Naive thymus-derived CD4-positive, alpha-beta T cell (primary cell): ENCODE measurements at regions of chr1 and their contacts with region 1.

Region 1: GRCh38 chr1:109263597-109264398 is 14.5 kb downstream of the CELSR2 start:
- DNase-seq: peak; percentile 57 to 86 (median 68)
- ATAC-seq: peak; percentile 92
- H3K4me3 ChIP-seq: no peak overlapping the region
- H3K4me3 Mint-ChIP-seq: peak overlapping the region in 1 of 10 donors; percentile 60
- H3K27ac ChIP-seq: no peak overlapping the region
- H3K27ac Mint-ChIP-seq: peak overlapping the region in 1 of 9 donors; percentile 36
- H3K4me1 ChIP-seq: no peaks in the 10 kb centered on the region
- H3K4me1 Mint-ChIP-seq: peaks cover 0 to 9% (median 0%) of the 10 kb centered on the region in 7 donors
- H3K27me3 ChIP-seq: no peaks in the 10 kb centered on the region
- H3K27me3 Mint-ChIP-seq: no peaks in the 10 kb centered on the region

Region 2: GRCh38 chr1:108828022-108828961 is 435.5 kb before region 1 on chr1:
- CTCF ChIA-PET with region 1: no interaction called
- POLR2A ChIA-PET with region 1: no interaction called
- intact Hi-C with region 1: loop called in 1 of 2 experiments (anchors 2 kb)
- DNase-seq: peak; percentile 37 to 62 (median 46)
- ATAC-seq: peak; percentile 61
- H3K4me3 ChIP-seq: no peak overlapping the region
- H3K4me3 Mint-ChIP-seq: no peak overlapping the region
- H3K27ac ChIP-seq: no peak overlapping the region
- H3K27ac Mint-ChIP-seq: no peak overlapping the region
- H3K4me1 ChIP-seq: no peaks in the 10 kb centered on the region
- H3K4me1 Mint-ChIP-seq: peaks cover 0 to 9% (median 0%) of the 10 kb centered on the region in 7 donors
- H3K27me3 ChIP-seq: peaks cover 0 to 3% of the 10 kb centered on the region in 2 donors
- H3K27me3 Mint-ChIP-seq: peaks cover 0 to 12% (median 0%) of the 10 kb centered on the region in 5 donors

Region 3: GRCh38 chr1:109201123-109201703 is 62.6 kb before region 1 on chr1:
- CTCF ChIA-PET with region 1: interaction called, 3 read pairs
- POLR2A ChIA-PET with region 1: no interaction called
- intact Hi-C with region 1: loop called in 1 of 2 experiments (anchors 1 kb)
- DNase-seq: peak in 3 of 9 donors; percentile 11 to 60 (median 17)
- ATAC-seq: no peak
- H3K4me3 ChIP-seq: no peak overlapping the region
- H3K4me3 Mint-ChIP-seq: no peak overlapping the region
- H3K27ac ChIP-seq: no peak overlapping the region
- H3K27ac Mint-ChIP-seq: peak overlapping the region in 2 of 9 donors; percentile 26 to 35
- H3K4me1 ChIP-seq: peaks cover 0 to 12% of the 10 kb centered on the region in 2 donors
- H3K4me1 Mint-ChIP-seq: peaks cover 5 to 28% (median 19%) of the 10 kb centered on the region in 7 donors
- H3K27me3 ChIP-seq: no peaks in the 10 kb centered on the region
- H3K27me3 Mint-ChIP-seq: no peaks in the 10 kb centered on the region

Region 4: DNA sequence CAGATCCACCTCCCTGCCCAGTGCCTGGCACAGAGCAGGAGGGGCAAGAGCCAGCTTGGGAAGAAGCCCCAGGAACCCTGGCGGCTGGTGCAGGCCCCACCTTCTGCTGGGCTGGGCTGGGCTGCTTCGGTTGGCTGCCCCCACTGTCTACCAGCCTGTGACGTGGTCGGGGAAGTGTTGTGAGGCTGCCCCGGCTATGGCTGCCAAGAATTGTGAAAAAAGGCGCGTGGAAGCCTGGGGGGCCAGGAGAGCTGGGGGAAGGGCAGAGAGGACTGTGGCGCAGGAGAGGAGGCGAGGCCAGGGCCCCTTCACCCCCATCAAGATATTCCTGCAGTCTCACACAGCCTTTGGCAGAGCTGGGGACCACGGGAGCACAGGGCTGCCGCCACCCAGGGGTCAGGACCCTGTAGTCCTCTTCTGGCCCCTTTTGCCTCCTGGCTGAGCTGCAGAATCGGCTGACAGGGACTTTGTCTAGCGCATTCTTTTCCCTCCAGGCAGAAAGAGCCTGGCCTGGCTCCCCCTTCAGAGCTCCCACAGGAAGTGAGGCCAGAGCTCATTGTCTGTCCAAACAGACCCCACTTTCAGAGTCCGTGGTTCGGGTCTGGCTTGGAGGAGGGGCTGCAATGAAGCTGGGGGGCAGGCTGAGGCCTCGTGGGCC is 10.2 kb before region 1 on chr1:
- CTCF ChIA-PET with region 1: no interaction called
- POLR2A ChIA-PET with region 1: no interaction called
- intact Hi-C with region 1: no loop called
- DNase-seq: no peak
- ATAC-seq: no peak
- H3K4me3 ChIP-seq: no peak overlapping the region
- H3K4me3 Mint-ChIP-seq: no peak overlapping the region
- H3K27ac ChIP-seq: no peak overlapping the region
- H3K27ac Mint-ChIP-seq: no peak overlapping the region
- H3K4me1 ChIP-seq: peaks cover 11 to 14% of the 10 kb centered on the region in 2 donors
- H3K4me1 Mint-ChIP-seq: peaks cover 3 to 27% (median 20%) of the 10 kb centered on the region in 7 donors
- H3K27me3 ChIP-seq: no peaks in the 10 kb centered on the region
- H3K27me3 Mint-ChIP-seq: peaks cover 0 to 15% (median 0%) of the 10 kb centered on the region in 5 donors

Region 5: DNA sequence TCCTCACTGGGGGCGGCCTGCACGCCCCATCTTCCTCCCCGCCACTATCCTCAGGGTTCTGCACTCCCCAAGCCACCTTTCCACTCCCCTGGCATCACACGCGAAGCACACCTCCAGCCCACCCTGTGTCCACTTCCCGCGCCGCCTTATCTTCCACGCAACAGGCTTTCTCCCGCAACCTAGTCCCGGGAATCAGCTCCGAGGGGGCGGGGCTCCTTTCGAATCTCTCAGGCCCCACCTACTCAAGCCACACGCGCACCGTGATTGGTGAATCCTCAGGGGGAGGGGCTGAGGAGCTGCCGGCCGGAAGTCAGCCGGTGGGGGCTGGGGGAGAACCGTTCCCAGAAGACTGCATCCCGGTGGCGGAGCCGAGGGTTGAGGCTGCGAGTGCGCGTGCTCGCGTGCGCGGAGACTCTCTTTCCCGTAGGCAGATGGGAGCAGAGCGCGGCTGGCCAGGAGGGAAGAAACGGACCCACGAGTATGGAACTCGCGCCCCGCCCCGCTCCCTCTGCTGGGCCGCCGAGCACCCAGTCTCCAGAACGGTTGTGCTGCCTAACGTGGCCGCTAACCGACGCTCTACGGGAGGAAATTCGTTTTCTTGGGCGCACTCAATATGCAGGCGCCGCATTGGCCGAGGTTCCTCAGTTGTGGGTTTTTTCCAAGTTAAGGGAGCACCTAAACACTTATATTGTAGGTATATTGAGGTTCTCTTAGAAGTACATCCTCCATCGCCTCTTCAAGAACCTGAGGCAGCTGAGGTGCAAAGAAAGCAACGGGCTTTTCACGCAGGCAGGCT is 19.4 kb after region 1 on chr1 and contains the start of gene PSRC1:
- CTCF ChIA-PET with region 1: interaction called, 3 read pairs
- POLR2A ChIA-PET with region 1: no interaction called
- intact Hi-C with region 1: loop called in 1 of 2 experiments (anchors 1 kb)
- DNase-seq: peak; percentile 78 to 94 (median 88)
- ATAC-seq: peak; percentile 98
- H3K4me3 ChIP-seq: peak within 1 kb of the TSS; percentile 92
- H3K4me3 Mint-ChIP-seq: peak within 1 kb of the TSS; percentile 89 to 99 (median 96)
- H3K27ac ChIP-seq: peak within 1 kb of the TSS; percentile 65
- H3K27ac Mint-ChIP-seq: peak within 1 kb of the TSS; percentile 55 to 94 (median 88)
- H3K4me1 ChIP-seq: peaks cover 8 to 11% of the 10 kb centered on the region in 2 donors
- H3K4me1 Mint-ChIP-seq: peaks cover 6 to 29% (median 14%) of the 10 kb centered on the region in 7 donors
- H3K27me3 ChIP-seq: no peaks in the 10 kb centered on the region
- H3K27me3 Mint-ChIP-seq: peaks cover 0 to 8% (median 0%) of the 10 kb centered on the region in 5 donors
- total RNA-seq, gene PSRC1: 0.38 to 16.1 (median 1.3) TPM in 4 of 5 experiments, not detected in the other

Region 6: GRCh38 chr1:109298666-109299557 is 35.1 kb after region 1 on chr1:
- CTCF ChIA-PET with region 1: no interaction called
- POLR2A ChIA-PET with region 1: no interaction called
- intact Hi-C with region 1: no loop called
- DNase-seq: peak in 1 of 9 donors; percentile 25
- ATAC-seq: no peak
- H3K4me3 ChIP-seq: no peak overlapping the region
- H3K4me3 Mint-ChIP-seq: no peak overlapping the region
- H3K27ac ChIP-seq: no peak overlapping the region
- H3K27ac Mint-ChIP-seq: no peak overlapping the region
- H3K4me1 ChIP-seq: no peaks in the 10 kb centered on the region
- H3K4me1 Mint-ChIP-seq: peaks cover 0 to 3% (median 0%) of the 10 kb centered on the region in 7 donors
- H3K27me3 ChIP-seq: no peaks in the 10 kb centered on the region
- H3K27me3 Mint-ChIP-seq: peaks cover 0 to 17% (median 10%) of the 10 kb centered on the region in 5 donors

Region 7: DNA sequence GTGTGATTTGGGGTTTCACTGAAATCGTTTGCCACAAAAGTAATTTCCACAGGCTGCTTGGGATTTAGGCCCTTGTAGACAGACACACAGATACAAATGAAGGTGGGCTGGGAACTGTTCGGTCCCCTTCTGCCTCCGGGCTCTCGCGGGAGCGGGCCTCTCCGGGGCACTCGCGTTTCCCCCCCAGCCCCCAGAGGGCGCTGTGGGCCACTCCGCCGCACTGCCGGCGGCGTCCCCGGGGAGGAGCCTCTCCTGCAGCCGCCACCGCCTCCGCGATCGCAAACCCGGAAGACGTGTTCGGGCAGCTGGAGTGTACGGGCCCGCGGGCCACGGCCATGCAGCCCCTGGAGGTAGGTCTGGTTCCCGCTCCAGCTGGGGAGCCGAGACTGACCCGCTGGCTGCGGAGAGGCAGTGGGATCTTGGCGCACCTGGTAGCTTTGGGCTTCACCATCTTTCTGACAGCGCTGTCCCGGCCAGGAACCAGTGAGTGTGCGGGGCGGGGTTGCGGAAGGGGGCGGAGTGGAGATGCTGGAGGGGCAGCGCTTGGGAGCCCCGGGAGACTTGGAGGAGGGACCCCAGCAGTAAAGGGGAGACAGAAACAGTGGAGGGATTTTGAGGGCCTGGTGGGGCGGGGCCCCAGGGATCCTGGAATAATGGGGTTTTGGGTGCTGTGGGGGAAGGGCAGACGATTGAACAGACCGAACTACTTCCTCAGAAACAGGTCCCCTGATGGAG is 230.2 kb after region 1 on chr1 and contains the start of gene CYB561D1:
- CTCF ChIA-PET with region 1: no interaction called
- POLR2A ChIA-PET with region 1: no interaction called
- intact Hi-C with region 1: loop called in 1 of 2 experiments (anchors 1 kb)
- DNase-seq: peak; percentile 83 to 97 (median 91)
- ATAC-seq: peak; percentile 96
- H3K4me3 ChIP-seq: peak within 1 kb of the TSS; percentile 96
- H3K4me3 Mint-ChIP-seq: peak within 1 kb of the TSS; percentile 90 to 98 (median 94)
- H3K27ac ChIP-seq: peak within 1 kb of the TSS; percentile 72
- H3K27ac Mint-ChIP-seq: peak within 1 kb of the TSS; percentile 84 to 98 (median 92)
- H3K4me1 ChIP-seq: peaks cover 31 to 59% of the 10 kb centered on the region in 2 donors
- H3K4me1 Mint-ChIP-seq: peaks cover 40 to 59% (median 53%) of the 10 kb centered on the region in 7 donors
- H3K27me3 ChIP-seq: no peaks in the 10 kb centered on the region
- H3K27me3 Mint-ChIP-seq: no peaks in the 10 kb centered on the region
- total RNA-seq, gene CYB561D1: 19.6 to 41.5 (median 24.1) TPM

Region 8: DNA sequence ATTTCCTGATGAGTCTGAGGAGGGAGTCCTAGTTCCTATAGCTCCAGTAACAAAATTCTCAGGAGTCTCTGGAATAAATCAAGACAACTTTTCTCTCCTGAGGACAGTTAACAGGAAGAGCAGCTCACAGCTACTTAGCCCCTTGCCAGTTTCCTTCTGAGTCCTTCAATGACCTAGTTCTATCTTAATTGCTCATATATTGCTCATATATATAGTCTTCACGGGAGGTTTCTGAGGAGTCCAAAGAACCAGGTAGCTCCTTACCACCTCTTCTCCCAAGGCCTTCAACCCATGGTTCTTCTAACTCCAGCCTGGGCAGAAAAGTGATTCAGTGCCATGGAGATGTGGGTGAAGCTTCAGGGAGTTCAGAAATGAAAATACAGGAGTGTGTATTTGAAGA is 241.2 kb after region 1 on chr1:
- CTCF ChIA-PET with region 1: no interaction called
- POLR2A ChIA-PET with region 1: no interaction called
- intact Hi-C with region 1: no loop called
- DNase-seq: no peak
- ATAC-seq: no peak
- H3K4me3 ChIP-seq: peak overlapping the region; percentile 35
- H3K4me3 Mint-ChIP-seq: peak overlapping the region; percentile 22 to 98 (median 89)
- H3K27ac ChIP-seq: peak overlapping the region; percentile 82
- H3K27ac Mint-ChIP-seq: peak overlapping the region in 8 of 9 donors; percentile 96 to 99 (median 98)
- H3K4me1 ChIP-seq: peaks cover 56 to 68% of the 10 kb centered on the region in 2 donors
- H3K4me1 Mint-ChIP-seq: peaks cover 54 to 94% (median 90%) of the 10 kb centered on the region in 7 donors
- H3K27me3 ChIP-seq: no peaks in the 10 kb centered on the region
- H3K27me3 Mint-ChIP-seq: peaks cover 0 to 17% (median 0%) of the 10 kb centered on the region in 5 donors